Esophagus squamous epithelium (tissue), 5 donors: ENCODE measurements at regions of chr7 and their contacts with region 1.

Region 1: DNA sequence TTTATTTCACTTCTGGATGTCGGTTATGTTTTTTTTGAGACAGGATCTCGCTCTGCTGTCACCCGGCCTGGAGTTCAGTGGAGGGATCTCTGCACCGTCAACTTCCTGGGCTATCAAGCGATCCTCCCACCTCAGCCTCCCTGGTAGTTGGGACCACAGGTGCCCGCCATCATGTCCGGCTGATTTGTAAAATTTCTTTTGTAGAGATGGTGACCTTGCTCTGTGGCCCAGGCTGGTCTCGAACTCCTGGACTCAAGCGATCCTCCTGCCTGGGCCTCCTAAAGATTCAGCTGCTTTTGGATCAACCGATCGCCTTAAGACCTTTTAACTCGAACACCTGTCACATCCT is 606 bp upstream of the RABGEF1 start:
- DNase-seq: no peak
- H3K4me3 ChIP-seq: peak overlapping the region; percentile 86 to 99 (median 93)
- H3K27ac ChIP-seq: peak overlapping the region; percentile 98 to 100 (median 100)
- H3K4me1 ChIP-seq: peaks cover 11 to 57% (median 13%) of the 10 kb centered on the region in 3 donors
- H3K27me3 ChIP-seq: no peaks in the 10 kb centered on the region
- CTCF ChIP-seq: no peak
- POLR2A ChIP-seq: no peak

Region 2: GRCh38 chr7:66681491-66682349 is 58.2 kb before region 1 on chr7:
- intact Hi-C with region 1: loop called (anchors 10 kb)
- DNase-seq: peak; percentile 82
- H3K4me3 ChIP-seq: peak overlapping the region; percentile 67 to 89 (median 72)
- H3K27ac ChIP-seq: peak overlapping the region; percentile 96 to 100 (median 98)
- H3K4me1 ChIP-seq: peaks cover 10 to 53% (median 20%) of the 10 kb centered on the region in 3 donors
- H3K27me3 ChIP-seq: no peaks in the 10 kb centered on the region
- CTCF ChIP-seq: peak in 1 of 6 experiments; percentile 11
- POLR2A ChIP-seq: peak in 3 of 4 donors; percentile 94 to 97 (median 94)